Body of pancreas (tissue), 4 donors: ENCODE measurements at regions of chr9 and their contacts with region 1.

Region 1: DNA sequence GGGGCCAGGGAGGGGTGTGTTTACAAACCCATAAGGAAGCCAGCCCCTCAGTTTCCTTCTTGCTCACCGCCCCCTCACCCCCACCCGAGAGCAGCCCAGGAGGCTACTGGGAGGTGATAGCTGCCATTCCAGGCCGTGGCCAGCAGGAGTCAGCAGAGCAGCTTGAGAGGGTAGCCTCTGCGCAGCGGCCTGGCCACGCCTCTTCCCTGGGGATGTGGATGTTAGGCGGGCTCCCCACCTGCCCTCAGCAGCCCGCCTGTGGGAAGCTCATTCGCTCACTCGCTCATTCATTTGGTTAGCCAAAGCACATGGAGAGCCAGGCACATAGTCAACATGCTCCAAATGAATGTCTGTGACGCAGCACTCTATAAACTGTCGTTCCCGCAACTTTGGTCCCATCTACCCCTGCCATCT is 6.1 kb upstream of the DPM2 start:
- DNase-seq: peak; percentile 80 to 88 (median 84)
- ATAC-seq: peak; percentile 79
- H3K4me3 ChIP-seq: no peak overlapping the region
- H3K27ac ChIP-seq: no peak overlapping the region
- H3K4me1 ChIP-seq: peaks cover 5% of the 10 kb centered on the region
- H3K27me3 ChIP-seq: no peaks in the 10 kb centered on the region
- CTCF ChIP-seq: peak; percentile 64 to 93 (median 82)
- POLR2A ChIP-seq: no peak

Region 2: DNA sequence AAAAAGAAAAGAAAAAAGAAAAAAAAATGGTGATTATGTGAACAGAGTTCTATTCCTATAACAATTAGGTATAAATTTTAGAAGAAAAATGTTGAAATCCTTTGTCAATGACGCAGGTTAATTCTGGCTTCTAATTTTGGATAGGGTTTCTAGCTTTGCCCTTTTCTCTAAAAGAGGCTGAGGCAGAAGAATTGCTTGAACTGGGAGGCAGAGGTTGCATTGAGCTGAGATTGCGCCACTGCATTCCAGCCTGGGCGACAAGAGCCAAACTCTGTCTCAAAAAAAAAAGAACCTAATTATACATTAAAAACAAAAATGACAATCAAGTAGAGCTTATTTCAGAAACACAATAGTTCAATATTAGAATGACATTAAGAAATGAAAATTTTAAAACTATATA is 328.8 kb before region 1 on chr9:
- intact Hi-C with region 1: no loop called
- DNase-seq: no peak
- ATAC-seq: no peak
- H3K4me3 ChIP-seq: no peak overlapping the region
- H3K27ac ChIP-seq: no peak overlapping the region
- H3K4me1 ChIP-seq: peaks cover 17% of the 10 kb centered on the region
- H3K27me3 ChIP-seq: no peaks in the 10 kb centered on the region
- CTCF ChIP-seq: no peak
- POLR2A ChIP-seq: no peak

Region 3: GRCh38 chr9:127684576-127684975 is 259.2 kb before region 1 on chr9:
- intact Hi-C with region 1: no loop called
- DNase-seq: no peak
- ATAC-seq: no peak
- H3K4me3 ChIP-seq: no peak overlapping the region
- H3K27ac ChIP-seq: no peak overlapping the region
- H3K4me1 ChIP-seq: no peaks in the 10 kb centered on the region
- H3K27me3 ChIP-seq: no peaks in the 10 kb centered on the region
- CTCF ChIP-seq: no peak
- POLR2A ChIP-seq: no peak

Region 4: GRCh38 chr9:128034821-128035764 is 91.4 kb after region 1 on chr9:
- intact Hi-C with region 1: loop called (anchors 2 kb)
- DNase-seq: peak; percentile 76 to 85 (median 80)
- ATAC-seq: peak; percentile 100
- H3K4me3 ChIP-seq: no peak overlapping the region
- H3K27ac ChIP-seq: no peak overlapping the region
- H3K4me1 ChIP-seq: peaks cover 9% of the 10 kb centered on the region
- H3K27me3 ChIP-seq: no peaks in the 10 kb centered on the region
- CTCF ChIP-seq: peak; percentile 70 to 98 (median 97)
- POLR2A ChIP-seq: no peak

Region 5: DNA sequence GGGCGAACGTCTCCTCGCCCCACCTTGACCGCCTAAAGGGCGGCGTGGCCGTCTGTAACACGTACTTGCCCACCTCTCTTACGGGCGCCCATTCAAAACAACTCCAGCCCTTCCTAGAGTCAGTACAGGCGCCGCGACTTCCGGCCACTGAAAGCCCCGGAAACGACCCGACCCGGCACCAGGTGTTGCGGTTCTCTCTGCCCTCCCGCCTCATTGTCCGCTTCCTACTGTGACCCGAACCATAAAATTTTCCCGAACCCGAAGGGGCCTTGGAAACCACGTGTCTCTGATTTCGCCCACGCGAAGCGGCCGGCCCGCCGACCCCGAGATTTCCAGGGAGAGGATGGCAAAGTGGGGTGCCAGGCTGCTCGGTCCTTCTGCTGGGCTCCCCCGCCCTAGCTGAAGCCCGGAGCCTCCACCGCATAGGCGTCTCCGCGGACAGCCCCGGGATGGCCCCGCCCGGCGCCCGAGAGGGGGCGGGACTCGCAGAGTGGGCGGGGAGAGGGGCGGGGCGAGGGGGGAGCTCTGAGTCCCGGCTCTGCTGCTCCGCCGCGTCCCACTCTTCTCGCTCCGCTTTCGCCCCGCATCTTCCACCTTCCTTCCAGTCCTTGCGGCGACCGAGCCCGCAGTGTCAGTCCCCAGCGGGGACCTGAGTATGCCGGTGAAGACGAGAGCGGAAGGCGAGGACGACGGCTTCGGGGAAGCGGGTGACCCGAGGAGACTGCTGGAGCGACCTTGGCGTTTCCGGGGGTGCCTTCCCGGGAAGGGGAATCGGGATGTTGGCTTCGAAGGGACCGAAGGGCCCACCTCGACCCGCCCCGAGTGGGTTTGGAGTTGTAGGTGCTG is 184.5 kb after region 1 on chr9:
- intact Hi-C with region 1: loop called (anchors 10 kb)
- DNase-seq: peak; percentile 84 to 89 (median 85)
- ATAC-seq: peak; percentile 89
- H3K4me3 ChIP-seq: peak overlapping the region; percentile 65 to 99
- H3K27ac ChIP-seq: peak overlapping the region; percentile 96 to 100 (median 98)
- H3K4me1 ChIP-seq: peaks cover 32% of the 10 kb centered on the region
- H3K27me3 ChIP-seq: no peaks in the 10 kb centered on the region
- CTCF ChIP-seq: peak in 2 of 7 experiments; percentile 1 to 13
- POLR2A ChIP-seq: peak in 2 of 3 donors; percentile 60 to 68

Region 6: DNA sequence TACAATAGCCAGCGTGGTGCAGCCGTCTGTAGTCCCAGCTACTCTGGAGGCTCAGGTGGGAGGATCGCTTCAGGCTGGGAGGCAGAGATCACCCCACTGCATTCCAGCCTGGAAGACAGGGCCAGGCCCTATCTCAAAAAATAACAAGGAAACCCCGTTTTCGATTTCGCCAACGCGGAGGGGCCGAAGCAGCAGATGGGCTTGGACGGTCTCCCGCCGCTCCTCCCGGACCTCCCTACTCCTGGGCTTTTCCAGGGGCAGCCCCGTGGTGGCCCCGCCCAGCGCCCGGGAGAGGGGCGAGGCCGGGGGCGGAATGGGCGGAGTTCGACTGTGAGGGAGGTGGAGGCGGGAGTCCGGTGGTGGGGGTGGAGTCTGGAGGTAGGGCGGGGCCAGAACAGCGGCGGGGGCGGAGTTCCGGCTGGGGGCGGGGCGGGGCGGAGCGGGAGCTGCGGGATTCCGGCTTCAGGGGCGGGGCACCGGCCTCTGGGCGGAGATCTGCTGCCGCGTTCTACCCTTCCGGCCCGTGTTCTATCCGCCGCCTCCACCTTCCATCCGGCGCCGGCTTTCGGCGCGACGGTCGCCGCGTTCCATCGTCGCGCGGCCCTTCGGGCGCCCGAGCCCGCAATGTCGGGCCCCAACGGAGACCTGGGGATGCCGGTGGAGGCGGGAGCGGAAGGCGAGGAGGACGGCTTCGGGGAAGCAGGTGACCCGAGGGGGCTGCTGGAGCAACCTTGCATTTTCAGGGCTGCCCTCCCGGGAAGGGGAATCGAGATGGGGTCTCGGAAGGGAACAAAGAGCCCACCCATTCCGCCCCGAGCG is 216.3 kb after region 1 on chr9 and contains the start of gene BBLN:
- intact Hi-C with region 1: no loop called
- DNase-seq: peak; percentile 94 to 96 (median 96)
- ATAC-seq: peak; percentile 93
- H3K4me3 ChIP-seq: peak within 1 kb of the TSS; percentile 26 to 65
- H3K27ac ChIP-seq: peak within 1 kb of the TSS; percentile 50 to 80 (median 67)
- H3K4me1 ChIP-seq: peaks cover 32% of the 10 kb centered on the region
- H3K27me3 ChIP-seq: no peaks in the 10 kb centered on the region
- CTCF ChIP-seq: no peak
- POLR2A ChIP-seq: peak; percentile 59 to 80 (median 78)
- total RNA-seq, gene BBLN: 113 to 129 TPM